ENCODE measurements at regions of chr14 and their contacts with region 1.

Region 1: GRCh38 chr14:50714450-50715073 is 46.5 kb upstream of the SAV1 start:
- DNase-seq: peak; percentile 67
- ATAC-seq: peak; percentile 93
- H3K4me3 ChIP-seq: no peak overlapping the region
- H3K27ac ChIP-seq: no peak overlapping the region
- H3K4me1 ChIP-seq: no peaks in the 10 kb centered on the region
- H3K27me3 ChIP-seq: no peaks in the 10 kb centered on the region
- CTCF ChIP-seq: peak; percentile 79

Region 2: GRCh38 chr14:50542941-50543418 is 171.6 kb before region 1 on chr14:
- CTCF ChIA-PET with region 1: no interaction called
- POLR2A ChIA-PET with region 1: no interaction called
- intact Hi-C with region 1: loop called (anchors 5 kb)
- DNase-seq: peak; percentile 87
- ATAC-seq: peak; percentile 82
- H3K4me3 ChIP-seq: no peak overlapping the region
- H3K27ac ChIP-seq: no peak overlapping the region
- H3K4me1 ChIP-seq: peaks cover 16% of the 10 kb centered on the region
- H3K27me3 ChIP-seq: no peaks in the 10 kb centered on the region
- CTCF ChIP-seq: peak; percentile 91

Region 3: GRCh38 chr14:50647282-50647681 is 67.3 kb before region 1 on chr14:
- CTCF ChIA-PET with region 1: no interaction called
- POLR2A ChIA-PET with region 1: no interaction called
- intact Hi-C with region 1: loop called (anchors 5 kb)
- DNase-seq: no peak
- ATAC-seq: no peak
- H3K4me3 ChIP-seq: no peak overlapping the region
- H3K27ac ChIP-seq: peak overlapping the region; percentile 51
- H3K4me1 ChIP-seq: peaks cover 36% of the 10 kb centered on the region
- H3K27me3 ChIP-seq: no peaks in the 10 kb centered on the region
- CTCF ChIP-seq: no peak

Region 4: GRCh38 chr14:50726372-50727107 is 12.0 kb after region 1 on chr14:
- CTCF ChIA-PET with region 1: no interaction called
- POLR2A ChIA-PET with region 1: interaction called, 19 read pairs
- intact Hi-C with region 1: no loop called
- DNase-seq: peak; percentile 77
- ATAC-seq: peak; percentile 91
- H3K4me3 ChIP-seq: no peak overlapping the region
- H3K27ac ChIP-seq: peak overlapping the region; percentile 48
- H3K4me1 ChIP-seq: peaks cover 21% of the 10 kb centered on the region
- H3K27me3 ChIP-seq: no peaks in the 10 kb centered on the region
- CTCF ChIP-seq: no peak

Region 5: DNA sequence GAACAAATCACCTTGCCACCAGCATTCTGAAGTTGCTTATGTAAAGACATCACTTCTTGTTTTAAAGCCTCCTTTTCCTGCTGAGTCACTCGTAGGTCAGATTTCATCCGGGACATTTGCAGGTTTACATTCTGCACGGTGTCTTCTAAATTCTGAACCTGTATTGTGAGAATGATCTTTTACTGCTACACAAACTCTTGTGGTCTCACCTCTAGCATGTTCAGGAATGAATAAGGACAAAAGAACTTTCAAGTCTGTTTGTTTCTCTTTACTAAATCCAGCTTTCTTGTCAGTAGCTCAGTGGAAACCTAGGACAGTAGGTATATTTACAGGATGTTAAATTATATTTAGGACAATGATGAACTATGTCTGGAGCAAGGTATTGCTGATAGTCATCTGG is 27.0 kb after region 1 on chr14:
- CTCF ChIA-PET with region 1: no interaction called
- POLR2A ChIA-PET with region 1: no interaction called
- intact Hi-C with region 1: no loop called
- DNase-seq: peak; percentile 95
- ATAC-seq: peak; percentile 93
- H3K4me3 ChIP-seq: peak overlapping the region; percentile 6; the same call in 1 of the 2 replicates
- H3K27ac ChIP-seq: peak overlapping the region; percentile 83
- H3K4me1 ChIP-seq: peaks cover 18% of the 10 kb centered on the region
- H3K27me3 ChIP-seq: no peaks in the 10 kb centered on the region
- CTCF ChIP-seq: no peak

Region 6: GRCh38 chr14:50778721-50779483 is 64.3 kb after region 1 on chr14:
- CTCF ChIA-PET with region 1: interaction called, 13 read pairs
- POLR2A ChIA-PET with region 1: no interaction called
- intact Hi-C with region 1: loop called (anchors 1 kb)
- DNase-seq: no peak
- ATAC-seq: peak; percentile 6; the same call in 1 of the 2 replicates
- H3K4me3 ChIP-seq: no peak overlapping the region
- H3K27ac ChIP-seq: no peak overlapping the region
- H3K4me1 ChIP-seq: peaks cover 37% of the 10 kb centered on the region
- H3K27me3 ChIP-seq: no peaks in the 10 kb centered on the region
- CTCF ChIP-seq: no peak